ENCODE measurements at regions of chr14 and their contacts with region 1.

Region 1: GRCh38 chr14:24806061-24806678 is 172.2 kb upstream of the GZMB start:
- DNase-seq: peak; percentile 62 to 78 (median 69)
- ATAC-seq: peak; percentile 46 to 80 (median 76)
- H3K4me3 ChIP-seq: no peak overlapping the region
- H3K27ac ChIP-seq: no peak overlapping the region
- H3K4me1 ChIP-seq: peaks cover 0 to 34% (median 15%) of the 10 kb centered on the region in 12 donors
- H3K27me3 ChIP-seq: no peaks in the 10 kb centered on the region
- CTCF ChIP-seq: peak; percentile 71 to 93 (median 84)
- POLR2A ChIP-seq: no peak

Region 2: GRCh38 chr14:24141097-24141880 is 664.9 kb before region 1 on chr14 and contains the start of gene EMC9:
- intact Hi-C with region 1: no loop called
- DNase-seq: peak; percentile 100
- ATAC-seq: peak; percentile 90 to 96 (median 94)
- H3K4me3 ChIP-seq: peak within 1 kb of the TSS; percentile 64 to 95 (median 72)
- H3K27ac ChIP-seq: peak within 1 kb of the TSS; percentile 59 to 96 (median 90)
- H3K4me1 ChIP-seq: peaks cover 3 to 91% (median 44%) of the 10 kb centered on the region in 12 donors
- H3K27me3 ChIP-seq: no peaks in the 10 kb centered on the region
- CTCF ChIP-seq: peak; percentile 26 to 75 (median 57)
- POLR2A ChIP-seq: peak in 1 of 2 donors; percentile 94
- total RNA-seq, gene EMC9: 9.6 to 18.7 (median 13.8) TPM

Region 3: GRCh38 chr14:24879661-24880386 is 73.7 kb after region 1 on chr14:
- intact Hi-C with region 1: no loop called
- DNase-seq: peak in 1 of 5 donors; percentile 35
- ATAC-seq: peak; percentile 29 to 63 (median 56)
- H3K4me3 ChIP-seq: no peak overlapping the region
- H3K27ac ChIP-seq: peak overlapping the region; percentile 33 to 81 (median 71)
- H3K4me1 ChIP-seq: peaks cover 9 to 78% (median 44%) of the 10 kb centered on the region in 12 donors
- H3K27me3 ChIP-seq: no peaks in the 10 kb centered on the region
- CTCF ChIP-seq: no peak
- POLR2A ChIP-seq: no peak

Region 4: DNA sequence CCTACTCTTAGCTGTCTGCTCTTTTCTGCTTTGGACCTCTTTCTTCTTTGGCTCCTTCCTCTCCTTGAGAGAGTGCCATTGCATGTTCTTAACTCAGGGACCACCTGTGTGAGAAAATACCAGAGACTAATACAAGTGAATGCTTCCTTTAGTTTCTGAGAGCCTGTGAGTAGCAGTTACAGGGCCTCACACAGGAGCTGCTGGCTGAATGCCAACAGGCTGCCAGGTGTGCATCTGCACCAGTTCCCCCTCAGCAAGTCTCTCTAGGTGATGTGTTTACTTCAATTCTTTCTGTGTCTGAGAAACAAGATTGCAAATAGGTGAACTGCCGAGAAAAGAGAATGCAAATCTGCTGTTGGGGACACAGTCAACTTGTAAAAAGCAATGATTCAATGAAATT is 135.5 kb after region 1 on chr14:
- intact Hi-C with region 1: no loop called
- DNase-seq: no peak
- ATAC-seq: no peak
- H3K4me3 ChIP-seq: no peak overlapping the region
- H3K27ac ChIP-seq: no peak overlapping the region
- H3K4me1 ChIP-seq: peaks cover 0 to 60% (median 5%) of the 10 kb centered on the region in 12 donors
- H3K27me3 ChIP-seq: no peaks in the 10 kb centered on the region
- CTCF ChIP-seq: no peak
- POLR2A ChIP-seq: no peak

Region 5: DNA sequence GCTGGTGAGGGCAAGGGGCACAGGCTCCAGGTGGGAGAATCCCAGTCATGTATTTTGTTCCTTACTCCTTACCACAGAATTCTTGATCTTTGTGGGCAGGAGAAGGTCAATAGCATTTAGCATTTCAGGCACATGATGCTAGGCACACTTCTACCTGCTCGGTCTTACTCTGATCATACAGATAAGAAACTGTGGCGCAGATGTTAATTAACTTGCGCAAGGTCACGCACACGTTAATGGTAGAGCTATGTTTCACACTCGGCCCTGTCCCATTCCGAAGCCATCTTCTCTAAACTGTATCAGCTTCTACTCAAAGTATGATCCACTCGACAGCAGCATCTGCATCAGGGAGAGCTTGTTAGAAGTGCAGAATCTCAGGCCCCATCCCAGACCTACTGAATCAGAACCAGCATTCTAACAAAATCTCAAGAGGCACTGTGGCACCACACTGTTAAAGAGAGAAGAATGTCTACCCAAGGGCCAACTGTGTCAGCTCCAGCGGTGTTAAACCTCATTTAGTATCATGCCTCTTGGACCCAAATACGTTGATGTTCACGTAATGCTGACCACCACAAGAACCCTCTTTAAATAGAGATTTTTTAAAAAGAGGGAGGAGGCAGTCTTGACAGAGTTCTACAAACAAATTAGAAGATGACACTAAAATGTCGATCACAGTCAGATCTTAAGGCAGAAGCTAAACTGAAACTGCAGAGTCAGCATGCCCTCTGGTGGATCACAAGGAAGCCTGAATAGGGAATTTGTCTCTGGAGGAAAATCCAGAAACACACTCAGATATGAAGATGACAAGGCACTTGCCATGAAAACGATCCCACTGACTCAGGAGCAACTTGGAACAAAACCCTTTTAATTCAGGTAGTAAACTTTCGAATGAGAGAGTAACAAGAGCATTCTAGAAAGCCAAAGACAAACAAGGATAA is 236.5 kb after region 1 on chr14:
- intact Hi-C with region 1: loop called in 9 of 10 experiments (anchors 1 to 5 kb)
- DNase-seq: peak in 3 of 5 donors; percentile 28 to 35 (median 33)
- ATAC-seq: peak in 2 of 4 donors; percentile 32 to 39
- H3K4me3 ChIP-seq: no peak overlapping the region
- H3K27ac ChIP-seq: peak overlapping the region in 3 of 12 donors; percentile 1 to 27 (median 13)
- H3K4me1 ChIP-seq: peaks cover 0 to 76% (median 16%) of the 10 kb centered on the region in 12 donors
- H3K27me3 ChIP-seq: no peaks in the 10 kb centered on the region
- CTCF ChIP-seq: peak; percentile 15 to 67 (median 54)
- POLR2A ChIP-seq: no peak

Region 6: GRCh38 chr14:25132732-25133422 is 326.7 kb after region 1 on chr14:
- intact Hi-C with region 1: loop called (anchors 1 to 5 kb)
- DNase-seq: peak; percentile 53 to 76 (median 69)
- ATAC-seq: peak; percentile 90 to 97 (median 96)
- H3K4me3 ChIP-seq: peak overlapping the region in 1 of 12 donors; percentile 16
- H3K27ac ChIP-seq: no peak overlapping the region
- H3K4me1 ChIP-seq: peaks cover 0 to 6% (median 2%) of the 10 kb centered on the region in 12 donors
- H3K27me3 ChIP-seq: peaks cover 0 to 47% (median 3%) of the 10 kb centered on the region in 9 donors
- CTCF ChIP-seq: peak; percentile 66 to 94 (median 87)
- POLR2A ChIP-seq: no peak

Measured in heart left ventricle (tissue), 16 donors.